HEK293 (cell line): ENCODE measurements at regions of chr3 and their contacts with region 1.

Region 1: GRCh38 chr3:47250309-47251060 is 32.1 kb downstream of the KIF9 start:
- H3K4me3 ChIP-seq: no peak overlapping the region
- H3K27ac ChIP-seq: no peak overlapping the region
- H3K4me1 ChIP-seq: no peaks in the 10 kb centered on the region
- CTCF ChIP-seq: no peak

Region 2: GRCh38 chr3:47261301-47261700 is 10.8 kb after region 1 on chr3:
- CTCF ChIA-PET with region 1: interaction called, 10 read pairs
- POLR2A ChIA-PET with region 1: no interaction called
- H3K4me3 ChIP-seq: no peak overlapping the region
- H3K27ac ChIP-seq: no peak overlapping the region
- H3K4me1 ChIP-seq: no peaks in the 10 kb centered on the region
- CTCF ChIP-seq: no peak

Region 3: DNA sequence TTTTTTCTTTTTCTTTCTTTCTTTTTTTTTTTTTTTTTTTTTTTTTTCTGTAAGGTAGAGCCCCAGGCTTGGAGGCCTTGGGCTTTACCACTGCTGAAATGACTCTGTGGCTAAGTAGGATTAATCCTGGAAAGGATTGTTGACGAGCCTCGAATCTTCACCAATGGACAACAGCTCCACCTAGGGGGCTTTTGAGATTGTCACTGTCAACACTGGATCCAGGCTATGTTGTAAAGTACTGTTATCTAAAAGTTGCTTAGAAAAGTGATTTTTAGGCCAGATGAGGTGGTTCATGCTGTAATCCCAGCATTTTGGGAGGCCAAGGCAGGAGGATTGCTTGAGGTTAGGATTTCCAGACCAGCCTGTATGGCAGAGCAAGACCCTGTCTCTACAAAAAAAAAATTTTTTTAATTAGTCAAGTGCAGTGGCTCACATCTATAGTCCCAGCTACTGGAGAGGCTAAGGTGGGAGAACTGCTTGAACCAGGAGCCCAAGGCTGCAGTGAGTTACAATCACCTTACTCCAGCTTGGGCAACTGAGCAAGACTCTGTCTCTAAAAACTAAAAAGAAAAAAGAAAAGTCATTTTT is 73.9 kb after region 1 on chr3:
- CTCF ChIA-PET with region 1: interaction called, 12 read pairs
- POLR2A ChIA-PET with region 1: no interaction called
- H3K4me3 ChIP-seq: no peak overlapping the region
- H3K27ac ChIP-seq: no peak overlapping the region
- H3K4me1 ChIP-seq: no peaks in the 10 kb centered on the region
- CTCF ChIP-seq: peak; percentile 24; the same call in 1 of the 2 replicates